Transverse colon (tissue), 4 donors: ENCODE measurements at regions of chr1 and their contacts with region 1.

Region 1: GRCh38 chr1:66253330-66253921 is 280.5 kb upstream of the SGIP1 start:
- DNase-seq: no peak
- H3K4me3 ChIP-seq: no peak overlapping the region
- H3K27ac ChIP-seq: no peak overlapping the region
- H3K4me1 ChIP-seq: peaks cover 0 to 11% (median 0%) of the 10 kb centered on the region in 4 donors
- H3K27me3 ChIP-seq: no peaks in the 10 kb centered on the region
- CTCF ChIP-seq: peak; percentile 68 to 80 (median 72)
- EP300 ChIP-seq: no peak
- POLR2A ChIP-seq: no peak

Region 2: DNA sequence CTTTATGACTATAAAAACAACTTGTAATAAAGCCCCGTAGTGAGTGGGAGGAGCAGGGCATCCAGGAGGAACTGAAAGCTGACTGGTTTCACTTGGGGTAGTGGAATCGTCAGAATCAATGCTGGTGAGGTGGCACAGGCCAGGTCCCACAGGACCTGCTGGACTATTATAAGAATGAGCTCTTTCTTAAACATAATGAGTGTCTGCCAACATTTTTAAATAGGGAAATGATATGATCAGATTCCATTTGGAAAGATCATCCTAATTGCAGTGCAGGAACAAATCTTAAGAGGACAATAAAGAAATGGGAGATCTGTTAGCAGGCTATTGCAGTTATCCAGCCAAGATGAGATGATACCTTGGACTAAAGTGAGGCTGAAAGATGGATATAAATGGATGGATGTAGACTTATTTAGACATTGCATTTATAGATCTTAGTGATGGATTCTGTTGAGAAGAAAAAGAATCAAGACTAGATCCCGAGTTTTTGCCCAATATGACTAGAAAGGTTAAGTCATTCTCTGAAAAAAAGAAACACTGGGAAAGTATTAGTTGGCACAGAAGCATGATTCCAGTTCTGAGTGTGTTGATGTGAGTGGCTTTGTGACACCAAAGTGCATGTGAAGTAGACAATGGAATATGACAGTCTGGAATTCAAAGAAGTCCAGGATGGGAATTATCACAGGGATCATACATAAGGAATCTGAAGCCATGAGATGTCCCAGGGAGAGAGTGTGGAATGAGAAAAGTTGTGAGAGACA is 127.2 kb after region 1 on chr1:
- in situ Hi-C with region 1: no loop called
- intact Hi-C with region 1: no loop called
- DNase-seq: peak; percentile 63
- H3K4me3 ChIP-seq: no peak overlapping the region
- H3K27ac ChIP-seq: peak overlapping the region in 1 of 4 donors; percentile 13
- H3K4me1 ChIP-seq: no peaks in the 10 kb centered on the region
- H3K27me3 ChIP-seq: no peaks in the 10 kb centered on the region
- CTCF ChIP-seq: no peak
- EP300 ChIP-seq: no peak
- POLR2A ChIP-seq: no peak

Region 3: DNA sequence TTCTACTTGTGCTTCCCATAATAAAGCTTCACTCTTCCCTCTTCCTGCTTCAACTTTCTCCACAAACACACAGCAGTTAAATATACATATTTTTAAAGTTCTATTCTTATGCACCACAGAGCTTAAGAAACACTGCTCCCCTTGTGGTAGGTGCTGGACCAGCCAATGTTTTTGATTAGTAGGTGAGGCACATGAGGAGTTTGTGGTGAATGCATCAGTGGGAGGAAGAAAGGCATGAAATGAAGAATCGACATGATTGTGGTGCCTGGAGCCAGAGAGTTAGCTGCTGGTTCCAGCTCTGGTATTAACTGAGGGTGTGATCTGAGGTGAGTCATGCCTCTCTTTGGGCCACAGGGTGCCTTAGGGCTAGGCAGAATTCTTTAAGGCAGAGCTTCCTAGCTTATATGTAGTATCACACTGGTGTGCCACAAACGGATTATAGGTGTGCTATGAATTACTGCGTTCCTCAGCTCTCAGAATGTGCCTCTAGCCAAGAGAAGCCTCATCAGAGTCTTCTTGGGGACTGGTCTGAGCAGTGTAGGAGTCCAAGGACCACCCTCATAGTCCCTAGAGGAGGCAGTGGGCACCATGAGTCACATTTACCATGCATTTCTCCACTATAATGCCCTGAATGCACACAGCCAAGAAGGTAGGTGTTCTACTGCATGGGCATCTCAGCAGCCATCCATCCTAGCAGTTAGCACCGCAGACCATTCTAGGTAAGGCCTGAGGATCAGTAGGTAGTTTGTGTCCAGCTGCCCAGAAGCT is 183.1 kb after region 1 on chr1:
- in situ Hi-C with region 1: loop called (anchors 5 to 10 kb)
- intact Hi-C with region 1: no loop called
- DNase-seq: no peak
- H3K4me3 ChIP-seq: no peak overlapping the region
- H3K27ac ChIP-seq: no peak overlapping the region
- H3K4me1 ChIP-seq: peaks cover 0 to 9% (median 0%) of the 10 kb centered on the region in 4 donors
- H3K27me3 ChIP-seq: no peaks in the 10 kb centered on the region
- CTCF ChIP-seq: peak in 1 of 5 experiments; percentile 8
- EP300 ChIP-seq: no peak
- POLR2A ChIP-seq: no peak

Region 4: DNA sequence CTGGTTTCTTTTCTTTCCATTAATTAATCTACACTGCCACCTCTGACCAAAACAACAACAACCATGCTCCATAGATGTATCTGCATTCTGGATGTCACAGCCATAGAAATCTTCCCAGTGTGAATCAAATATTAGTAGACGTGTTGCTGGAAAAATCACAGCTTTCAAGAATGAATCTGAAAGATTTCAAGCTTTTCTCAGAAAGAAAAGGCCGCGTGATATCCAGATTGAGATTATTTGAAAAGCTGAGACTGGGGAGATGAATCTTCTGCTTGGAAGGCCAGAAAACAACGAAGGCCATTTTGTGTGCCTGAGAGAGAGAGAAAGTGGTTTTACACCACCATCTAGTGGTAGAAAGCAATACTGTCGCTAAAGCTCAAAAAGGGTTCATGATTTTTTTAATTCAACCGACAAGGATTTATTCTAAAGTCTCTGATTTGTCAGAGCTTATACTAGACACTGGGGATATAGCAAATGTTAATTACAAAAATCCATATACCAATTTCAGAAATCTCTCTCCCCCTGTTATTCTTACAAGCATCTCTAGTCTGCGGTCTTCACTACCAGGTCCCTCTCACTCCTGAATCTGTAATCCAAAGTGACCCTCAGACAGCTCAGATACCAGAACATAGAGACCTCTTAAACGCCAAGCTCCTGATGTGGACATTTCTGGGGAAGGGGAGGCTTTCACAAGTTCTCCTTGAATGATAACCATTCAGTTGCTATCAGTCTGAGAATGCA is 193.0 kb after region 1 on chr1:
- in situ Hi-C with region 1: loop called in 3 of 4 experiments (anchors 5 to 10 kb)
- intact Hi-C with region 1: loop called (anchors 2 kb)
- DNase-seq: no peak
- H3K4me3 ChIP-seq: no peak overlapping the region
- H3K27ac ChIP-seq: peak overlapping the region; percentile 47 to 78 (median 68)
- H3K4me1 ChIP-seq: peaks cover 0 to 30% (median 7%) of the 10 kb centered on the region in 4 donors
- H3K27me3 ChIP-seq: no peaks in the 10 kb centered on the region
- CTCF ChIP-seq: peak; percentile 81 to 96 (median 85)
- EP300 ChIP-seq: no peak
- POLR2A ChIP-seq: no peak

Region 5: DNA sequence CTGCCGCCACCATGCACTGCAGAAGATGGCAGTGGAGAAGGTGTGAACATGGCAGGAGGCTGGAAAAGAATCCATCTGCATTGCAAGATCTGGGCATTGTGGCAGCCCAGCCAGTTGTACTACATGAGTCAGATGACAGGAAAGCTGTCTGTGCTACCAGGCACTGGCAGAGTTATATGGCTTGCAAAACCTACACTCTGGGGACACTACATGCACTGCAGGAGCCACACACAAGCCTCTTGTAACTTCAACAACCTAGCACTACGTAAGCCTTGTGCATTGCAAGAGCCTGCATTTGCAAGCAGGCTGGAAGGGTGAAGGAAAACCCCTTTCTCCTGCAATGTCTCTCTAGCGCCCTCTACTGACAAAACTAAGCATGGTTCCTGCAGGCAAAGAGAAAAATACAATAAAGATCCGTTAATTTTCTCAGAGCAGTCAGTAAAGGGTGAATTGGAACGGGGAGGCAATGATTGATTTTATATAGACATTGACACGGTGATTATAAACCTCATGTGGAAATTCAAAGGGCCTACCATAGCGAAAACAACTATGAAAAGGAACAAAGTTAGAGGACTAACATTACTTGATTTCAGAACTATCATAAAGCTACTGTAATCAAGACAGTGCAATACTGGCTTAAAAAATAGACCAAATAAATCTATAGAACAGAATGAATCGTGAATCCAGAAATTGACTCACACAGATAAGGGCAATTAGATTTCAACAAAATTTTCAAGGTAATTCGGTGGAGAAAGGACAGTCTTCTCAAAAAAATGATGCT is 472.6 kb after region 1 on chr1:
- in situ Hi-C with region 1: loop called in 2 of 4 experiments (anchors 25 kb)
- intact Hi-C with region 1: no loop called
- DNase-seq: peak; percentile 21
- H3K4me3 ChIP-seq: no peak overlapping the region
- H3K27ac ChIP-seq: no peak overlapping the region
- H3K4me1 ChIP-seq: peaks cover 0 to 6% (median 0%) of the 10 kb centered on the region in 4 donors
- H3K27me3 ChIP-seq: no peaks in the 10 kb centered on the region
- CTCF ChIP-seq: peak; percentile 61 to 93 (median 90)
- EP300 ChIP-seq: no peak
- POLR2A ChIP-seq: no peak